ENCODE measurements at regions of chr17 and their contacts with region 1.

Region 1: DNA sequence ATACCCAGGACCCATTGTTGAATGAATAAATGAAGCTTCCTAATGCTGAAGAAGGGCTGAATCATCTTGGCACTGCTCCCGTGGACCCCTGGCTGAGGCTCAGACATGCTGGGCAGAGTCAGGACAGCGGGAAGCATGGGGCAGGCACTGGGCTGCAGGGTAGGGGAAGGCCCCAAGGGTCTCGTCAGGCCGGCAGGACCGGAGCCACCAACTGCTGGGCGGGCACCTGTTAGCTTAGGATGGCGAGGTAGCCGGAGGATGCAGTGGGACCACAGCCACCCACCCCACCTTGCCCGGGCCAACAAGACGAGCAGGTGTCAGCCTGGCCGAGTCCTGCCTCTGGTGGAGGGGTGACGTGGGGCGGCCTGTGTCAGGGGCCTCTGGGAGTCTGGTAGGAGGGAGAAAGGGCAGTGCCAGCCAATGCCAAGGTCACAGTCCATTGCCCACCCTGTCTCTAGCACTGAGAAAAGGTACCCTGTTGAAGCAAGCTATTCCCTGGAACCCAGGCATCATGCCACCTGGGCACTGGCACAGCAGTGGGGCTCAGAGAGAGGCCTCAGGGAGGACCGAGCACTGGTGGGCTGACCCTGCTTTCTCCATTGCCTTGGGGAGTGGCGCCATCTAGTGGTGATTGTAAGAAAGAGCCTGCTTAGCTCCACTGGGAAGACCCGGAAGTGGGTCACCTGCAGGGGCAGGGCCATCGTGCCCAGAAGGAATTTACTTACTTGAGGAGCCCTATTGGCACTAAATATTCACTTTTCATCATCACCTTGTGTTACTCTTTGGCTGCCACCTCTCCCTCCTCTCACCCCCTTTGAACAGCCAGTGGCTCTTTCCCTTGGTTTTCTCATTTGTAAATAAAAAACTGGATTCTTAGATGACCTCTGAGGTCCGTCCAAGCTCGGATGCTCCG is 3.0 kb upstream of the DLX3 start:
- DNase-seq: peak; percentile 86
- H3K4me3 Mint-ChIP-seq: no peak overlapping the region
- H3K27ac Mint-ChIP-seq: no peak overlapping the region
- H3K4me1 Mint-ChIP-seq: peaks cover 33% of the 10 kb centered on the region
- H3K27me3 Mint-ChIP-seq: peaks cover 72% of the 10 kb centered on the region

Region 2: DNA sequence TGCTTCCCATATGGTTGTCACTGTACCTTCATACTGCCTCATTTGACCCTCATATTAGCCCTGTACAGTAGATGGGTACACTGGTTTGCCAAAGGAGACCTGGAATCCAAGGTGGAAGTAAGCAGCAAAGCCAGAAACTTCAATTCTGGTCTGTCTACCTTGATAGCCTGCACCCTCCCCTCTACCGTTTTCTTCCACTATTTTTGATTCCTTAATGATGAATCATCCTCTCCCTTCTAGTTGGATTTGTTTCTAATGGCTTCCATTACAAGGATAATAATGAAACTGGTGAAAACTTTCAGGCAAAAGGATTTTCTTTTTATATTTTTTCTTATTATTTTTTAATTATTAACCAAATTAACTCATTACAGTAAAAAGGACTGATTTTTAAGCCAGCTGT is 167.4 kb before region 1 on chr17:
- CTCF ChIA-PET with region 1: no interaction called
- POLR2A ChIA-PET with region 1: no interaction called
- DNase-seq: no peak
- H3K4me3 Mint-ChIP-seq: no peak overlapping the region
- H3K27ac Mint-ChIP-seq: no peak overlapping the region
- H3K4me1 Mint-ChIP-seq: no peaks in the 10 kb centered on the region
- H3K27me3 Mint-ChIP-seq: no peaks in the 10 kb centered on the region

Region 3: GRCh38 chr17:49851387-49852291 is 146.4 kb before region 1 on chr17:
- CTCF ChIA-PET with region 1: interaction called, 132 read pairs
- POLR2A ChIA-PET with region 1: interaction called, 3 read pairs
- DNase-seq: peak; percentile 73
- H3K4me3 Mint-ChIP-seq: peak overlapping the region; percentile 79
- H3K27ac Mint-ChIP-seq: peak overlapping the region; percentile 67
- H3K4me1 Mint-ChIP-seq: peaks cover 16% of the 10 kb centered on the region
- H3K27me3 Mint-ChIP-seq: peaks cover 8% of the 10 kb centered on the region

Region 4: GRCh38 chr17:49880291-49881053 is 117.6 kb before region 1 on chr17:
- CTCF ChIA-PET with region 1: interaction called, 63 read pairs
- POLR2A ChIA-PET with region 1: interaction called, 4 read pairs
- DNase-seq: peak; percentile 78
- H3K4me3 Mint-ChIP-seq: no peak overlapping the region
- H3K27ac Mint-ChIP-seq: no peak overlapping the region
- H3K4me1 Mint-ChIP-seq: peaks cover 4% of the 10 kb centered on the region
- H3K27me3 Mint-ChIP-seq: peaks cover 30% of the 10 kb centered on the region

Region 5: DNA sequence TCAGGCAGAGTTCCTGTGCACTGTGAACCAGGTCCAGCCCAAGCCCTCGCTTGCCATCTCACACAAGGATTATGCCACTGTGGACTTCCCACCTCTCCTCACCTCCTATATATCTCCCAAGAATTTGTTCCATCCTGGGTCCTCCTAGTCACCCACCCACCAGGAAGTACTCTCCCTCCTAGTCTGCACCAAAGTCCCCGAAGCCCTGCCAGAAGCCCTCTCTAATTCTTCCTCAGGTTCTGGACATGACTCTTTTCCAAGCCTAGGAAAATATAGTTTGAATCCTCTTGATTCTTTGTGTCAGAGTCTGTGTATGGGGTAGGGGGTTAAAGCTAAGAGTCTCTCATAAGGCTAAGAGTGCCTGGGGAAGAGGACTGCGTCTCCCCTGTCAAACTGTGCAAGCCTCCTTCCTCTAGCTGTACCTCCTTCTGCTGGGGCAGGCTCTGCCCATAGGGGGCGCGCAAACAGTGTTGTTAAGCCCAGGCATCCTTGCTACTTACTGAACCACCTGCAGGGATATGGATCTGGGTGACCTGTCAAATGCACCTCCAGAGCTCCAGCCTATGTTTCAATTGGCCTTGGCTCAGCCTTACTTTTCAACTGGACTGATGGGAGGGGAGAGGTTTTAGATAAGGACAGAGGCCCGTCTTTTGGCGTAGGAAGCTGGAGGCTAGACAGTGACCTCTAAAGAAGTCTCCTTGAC is 45.7 kb before region 1 on chr17:
- CTCF ChIA-PET with region 1: interaction called, 159 read pairs
- POLR2A ChIA-PET with region 1: interaction called, 8 read pairs
- DNase-seq: peak; percentile 83
- H3K4me3 Mint-ChIP-seq: no peak overlapping the region
- H3K27ac Mint-ChIP-seq: no peak overlapping the region
- H3K4me1 Mint-ChIP-seq: no peaks in the 10 kb centered on the region
- H3K27me3 Mint-ChIP-seq: peaks cover 41% of the 10 kb centered on the region

Region 6: GRCh38 chr17:49987681-49988441 is 10.2 kb before region 1 on chr17:
- CTCF ChIA-PET with region 1: interaction called, 23 read pairs
- POLR2A ChIA-PET with region 1: no interaction called
- DNase-seq: no peak
- H3K4me3 Mint-ChIP-seq: no peak overlapping the region
- H3K27ac Mint-ChIP-seq: no peak overlapping the region
- H3K4me1 Mint-ChIP-seq: peaks cover 2% of the 10 kb centered on the region
- H3K27me3 Mint-ChIP-seq: peaks cover 59% of the 10 kb centered on the region

Region 7: DNA sequence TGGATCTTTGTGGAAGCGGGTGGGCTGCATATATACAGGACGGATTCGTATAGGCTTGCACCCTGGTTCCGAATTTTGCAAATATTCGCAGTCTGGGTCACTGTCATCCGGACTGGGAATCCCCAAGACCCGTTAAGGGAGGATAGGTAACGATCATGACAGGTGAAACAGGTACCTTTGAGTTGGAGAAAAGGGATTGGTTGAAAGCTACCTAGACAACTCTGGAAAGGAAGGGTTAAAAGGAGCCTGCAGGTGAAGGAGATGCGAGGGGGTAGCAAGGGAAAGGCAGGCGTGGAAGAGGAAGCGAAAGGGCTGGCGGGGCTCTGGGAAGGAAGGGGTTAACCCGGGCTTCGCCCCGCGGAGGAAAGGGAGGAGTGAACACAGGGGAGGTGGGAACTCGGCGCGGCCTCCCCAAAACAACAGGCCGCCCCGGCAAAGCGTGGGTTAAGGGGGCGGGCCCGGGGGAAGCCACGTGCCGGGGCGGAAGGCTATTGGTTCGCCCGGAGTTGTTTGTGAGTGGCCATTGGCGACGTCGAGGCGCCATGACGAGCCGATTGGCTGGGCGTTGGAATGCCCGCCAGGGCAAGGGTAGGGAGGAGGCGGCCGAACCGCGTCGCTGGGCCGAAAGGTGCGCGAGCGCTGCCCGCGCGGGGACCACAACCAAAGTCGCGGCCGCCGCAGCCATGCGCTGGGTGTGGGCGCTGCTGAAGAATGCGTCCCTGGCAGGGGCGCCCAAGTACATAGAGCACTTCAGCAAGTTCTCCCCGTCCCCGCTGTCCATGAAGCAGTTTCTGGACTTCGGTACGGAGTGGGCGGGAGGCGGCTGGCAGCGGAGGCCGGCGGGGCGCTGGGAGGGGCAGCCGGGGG is 96.9 kb after region 1 on chr17 and contains the start of gene PDK2:
- CTCF ChIA-PET with region 1: interaction called, 21 read pairs
- POLR2A ChIA-PET with region 1: interaction called, 3 read pairs
- DNase-seq: peak; percentile 98
- H3K4me3 Mint-ChIP-seq: peak within 1 kb of the TSS; percentile 79
- H3K27ac Mint-ChIP-seq: peak within 1 kb of the TSS; percentile 76
- H3K4me1 Mint-ChIP-seq: peaks cover 19% of the 10 kb centered on the region
- H3K27me3 Mint-ChIP-seq: no peaks in the 10 kb centered on the region
- total RNA-seq, gene PDK2: 19.6 to 23.4 TPM